Activated CD4-positive, alpha-beta T cell treated with anti-CD3 and anti-CD28 coated beads, Interleukin-2, amount 10 ng/mL, durations not matched to agents 24 days and 14 days (primary cell): ENCODE measurements at regions of chr11 and their contacts with region 1.

Region 1: DNA sequence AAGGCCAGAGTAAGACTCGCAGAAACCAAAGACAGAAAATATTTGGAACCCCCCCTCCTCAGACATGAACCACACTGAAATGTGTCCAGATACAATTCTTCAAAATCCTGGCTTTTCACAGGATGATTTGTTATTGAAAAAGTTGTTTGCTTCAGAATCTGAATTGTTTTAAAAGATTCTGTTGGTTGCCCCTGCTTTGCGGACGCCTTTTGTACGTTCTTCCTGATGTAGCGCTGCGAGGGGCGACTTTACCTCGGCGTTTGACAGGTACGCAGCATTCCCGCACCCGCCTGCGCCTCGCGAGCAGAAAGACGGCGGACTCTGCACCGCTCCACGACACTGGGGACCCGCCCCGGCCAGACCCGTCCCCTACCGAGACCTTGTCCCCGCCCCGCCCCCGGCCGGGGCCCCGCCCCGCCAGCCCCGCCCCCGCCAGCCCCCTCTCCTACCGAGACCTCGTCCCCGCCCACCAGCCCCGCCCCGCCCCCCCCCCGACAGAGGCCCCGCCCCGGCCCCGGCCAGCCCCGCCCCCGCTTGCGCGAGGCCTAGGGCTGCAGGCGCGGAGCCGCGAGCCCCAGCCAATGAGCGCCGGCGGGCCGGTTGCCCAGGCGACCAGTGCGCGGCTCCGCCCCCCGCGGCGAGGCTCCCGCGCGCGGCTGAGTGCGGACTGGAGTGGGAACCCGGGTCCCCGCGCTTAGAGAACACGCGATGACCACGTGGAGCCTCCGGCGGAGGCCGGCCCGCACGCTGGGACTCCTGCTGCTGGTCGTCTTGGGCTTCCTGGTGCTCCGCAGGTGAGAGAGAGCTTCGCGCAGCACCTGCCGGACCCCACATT is at the start of gene GLB1L2:
- DNase-seq: peak; percentile 96
- H3K4me3 Mint-ChIP-seq: peak within 1 kb of the TSS; percentile 86
- H3K27ac Mint-ChIP-seq: peak within 1 kb of the TSS; percentile 48
- H3K4me1 Mint-ChIP-seq: peaks cover 14% of the 10 kb centered on the region
- H3K27me3 Mint-ChIP-seq: peaks cover 51% of the 10 kb centered on the region
- total RNA-seq, gene GLB1L2: 10.2 and 11.2 TPM in 2 replicates

Region 2: GRCh38 chr11:133956650-133957633 is 374.6 kb before region 1 on chr11 and contains the start of gene IGSF9B:
- intact Hi-C with region 1: loop called (anchors 5 kb)
- DNase-seq: peak; percentile 98
- H3K4me3 Mint-ChIP-seq: peak within 1 kb of the TSS; percentile 96
- H3K27ac Mint-ChIP-seq: peak within 1 kb of the TSS; percentile 89
- H3K4me1 Mint-ChIP-seq: peaks cover 50% of the 10 kb centered on the region
- H3K27me3 Mint-ChIP-seq: peaks cover 19% of the 10 kb centered on the region
- total RNA-seq, gene IGSF9B: 90.5 and 91.8 TPM in 2 replicates

Region 3: GRCh38 chr11:134068829-134069425 is 262.6 kb before region 1 on chr11 and contains the start of gene JAM3:
- intact Hi-C with region 1: loop called (anchors 10 kb)
- DNase-seq: peak; percentile 99
- H3K4me3 Mint-ChIP-seq: peak within 1 kb of the TSS; percentile 96
- H3K27ac Mint-ChIP-seq: peak within 1 kb of the TSS; percentile 82
- H3K4me1 Mint-ChIP-seq: peaks cover 9% of the 10 kb centered on the region
- H3K27me3 Mint-ChIP-seq: peaks cover 61% of the 10 kb centered on the region
- total RNA-seq, gene JAM3: 4.7 and 5.0 TPM in 2 replicates

Region 4: GRCh38 chr11:134253188-134253993 is 78.2 kb before region 1 on chr11 and contains the starts of genes ACAD8 and THYN1:
- intact Hi-C with region 1: loop called (anchors 1 kb)
- DNase-seq: peak; percentile 98
- H3K4me3 Mint-ChIP-seq: peak within 1 kb of the TSS; percentile 94
- H3K27ac Mint-ChIP-seq: peak within 1 kb of the TSS; percentile 88
- H3K4me1 Mint-ChIP-seq: peaks cover 29% of the 10 kb centered on the region
- H3K27me3 Mint-ChIP-seq: no peaks in the 10 kb centered on the region
- total RNA-seq, gene ACAD8: 26.0 and 26.7 TPM in 2 replicates
- total RNA-seq, gene THYN1: 61.6 and 69.1 TPM in 2 replicates

Region 5: DNA sequence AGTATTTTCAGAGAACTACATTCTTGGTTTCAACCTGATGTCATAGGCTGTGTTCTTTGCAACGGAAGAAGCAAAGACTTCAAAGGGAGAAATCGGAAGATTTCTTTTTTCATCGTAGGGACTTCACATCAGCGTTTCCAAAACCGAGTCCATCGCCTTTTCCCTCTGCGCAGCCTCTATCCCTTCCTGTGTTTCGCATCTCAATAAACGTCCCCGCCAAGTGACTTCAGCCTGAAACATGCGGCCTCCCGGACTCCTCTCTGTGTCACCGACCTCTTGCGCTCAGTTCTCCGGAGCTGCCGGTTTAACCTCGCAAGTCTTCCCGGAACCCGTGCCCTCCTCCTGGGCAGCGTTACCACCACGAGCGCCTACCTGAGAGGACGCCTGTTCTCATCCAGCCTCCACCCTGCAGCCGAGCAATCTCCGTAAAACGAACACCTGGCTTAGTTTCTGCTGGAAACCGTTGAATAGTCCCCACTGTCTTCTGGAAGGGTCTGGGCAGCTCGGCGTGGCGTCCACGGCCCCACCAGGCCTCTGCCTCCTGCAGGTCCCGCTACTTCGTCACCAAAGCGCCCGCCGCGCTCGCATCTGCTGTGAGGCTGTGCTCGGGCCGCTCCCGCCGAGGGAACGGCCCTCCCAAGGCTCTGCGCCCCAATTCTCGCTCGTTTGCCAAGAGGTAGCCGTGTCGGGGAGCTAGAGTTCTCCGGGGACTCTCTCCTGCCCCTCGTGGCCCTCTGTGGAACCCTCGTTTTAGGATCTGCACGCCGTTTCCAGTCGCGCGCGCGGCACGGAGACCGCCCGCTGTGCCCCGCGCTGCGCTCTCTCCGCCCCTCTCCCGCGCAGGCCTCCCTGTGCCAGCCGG is 55.8 kb before region 1 on chr11 and contains the start of gene GLB1L3:
- intact Hi-C with region 1: loop called (anchors 1 kb)
- DNase-seq: peak; percentile 96
- H3K4me3 Mint-ChIP-seq: peak within 1 kb of the TSS; percentile 98
- H3K27ac Mint-ChIP-seq: peak within 1 kb of the TSS; percentile 93
- H3K4me1 Mint-ChIP-seq: peaks cover 46% of the 10 kb centered on the region
- H3K27me3 Mint-ChIP-seq: peaks cover 3% of the 10 kb centered on the region
- total RNA-seq, gene GLB1L3: 16.5 and 17.0 TPM in 2 replicates